A673 (cell line): ENCODE measurements at regions of chr13 and their contacts with region 1.

Region 1: GRCh38 chr13:36848199-36848982 is 29.4 kb downstream of the RFXAP start:
- DNase-seq: peak; percentile 36
- H3K4me3 ChIP-seq: no peak overlapping the region
- H3K27ac ChIP-seq: peak overlapping the region; percentile 54
- H3K4me1 ChIP-seq: peaks cover 33% of the 10 kb centered on the region
- H3K27me3 ChIP-seq: no peaks in the 10 kb centered on the region
- CTCF ChIP-seq: peak; percentile 46

Region 2: DNA sequence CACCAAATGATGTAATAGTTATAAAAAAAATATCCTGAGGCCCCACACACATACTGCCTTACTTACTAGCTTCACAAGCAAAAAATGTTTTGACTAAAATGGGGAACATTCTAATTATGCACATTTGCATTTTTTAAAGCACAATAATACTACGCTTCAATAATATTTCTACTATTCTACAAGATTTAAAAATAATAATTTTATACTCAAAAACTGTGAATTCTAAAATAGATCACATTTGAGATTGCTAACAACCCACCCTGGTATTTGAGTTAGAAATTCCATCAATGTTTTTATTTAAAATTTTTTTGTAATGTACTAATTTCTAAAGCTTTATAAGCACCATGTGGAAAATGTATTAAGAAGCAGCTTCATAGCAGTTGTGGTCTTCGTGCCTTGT is 575.0 kb before region 1 on chr13:
- CTCF ChIA-PET with region 1: no interaction called
- POLR2A ChIA-PET with region 1: no interaction called
- intact Hi-C with region 1: no loop called
- DNase-seq: no peak
- H3K4me3 ChIP-seq: no peak overlapping the region
- H3K27ac ChIP-seq: no peak overlapping the region
- H3K4me1 ChIP-seq: no peaks in the 10 kb centered on the region
- H3K27me3 ChIP-seq: no peaks in the 10 kb centered on the region
- CTCF ChIP-seq: no peak

Region 3: GRCh38 chr13:36420437-36420891 is 427.9 kb before region 1 on chr13:
- CTCF ChIA-PET with region 1: no interaction called
- POLR2A ChIA-PET with region 1: no interaction called
- intact Hi-C with region 1: loop called (anchors 10 kb)
- DNase-seq: peak; percentile 92
- H3K4me3 ChIP-seq: no peak overlapping the region
- H3K27ac ChIP-seq: peak overlapping the region; percentile 31
- H3K4me1 ChIP-seq: peaks cover 39% of the 10 kb centered on the region
- H3K27me3 ChIP-seq: no peaks in the 10 kb centered on the region
- CTCF ChIP-seq: peak; percentile 92

Region 4: GRCh38 chr13:37068962-37069361 is 220.6 kb after region 1 on chr13:
- CTCF ChIA-PET with region 1: no interaction called
- POLR2A ChIA-PET with region 1: no interaction called
- intact Hi-C with region 1: loop called (anchors 10 kb)
- DNase-seq: peak; percentile 50
- H3K4me3 ChIP-seq: no peak overlapping the region
- H3K27ac ChIP-seq: no peak overlapping the region
- H3K4me1 ChIP-seq: no peaks in the 10 kb centered on the region
- H3K27me3 ChIP-seq: no peaks in the 10 kb centered on the region
- CTCF ChIP-seq: peak; percentile 70